ENCODE measurements at regions of chr1 and their contacts with region 1.

Region 1: DNA sequence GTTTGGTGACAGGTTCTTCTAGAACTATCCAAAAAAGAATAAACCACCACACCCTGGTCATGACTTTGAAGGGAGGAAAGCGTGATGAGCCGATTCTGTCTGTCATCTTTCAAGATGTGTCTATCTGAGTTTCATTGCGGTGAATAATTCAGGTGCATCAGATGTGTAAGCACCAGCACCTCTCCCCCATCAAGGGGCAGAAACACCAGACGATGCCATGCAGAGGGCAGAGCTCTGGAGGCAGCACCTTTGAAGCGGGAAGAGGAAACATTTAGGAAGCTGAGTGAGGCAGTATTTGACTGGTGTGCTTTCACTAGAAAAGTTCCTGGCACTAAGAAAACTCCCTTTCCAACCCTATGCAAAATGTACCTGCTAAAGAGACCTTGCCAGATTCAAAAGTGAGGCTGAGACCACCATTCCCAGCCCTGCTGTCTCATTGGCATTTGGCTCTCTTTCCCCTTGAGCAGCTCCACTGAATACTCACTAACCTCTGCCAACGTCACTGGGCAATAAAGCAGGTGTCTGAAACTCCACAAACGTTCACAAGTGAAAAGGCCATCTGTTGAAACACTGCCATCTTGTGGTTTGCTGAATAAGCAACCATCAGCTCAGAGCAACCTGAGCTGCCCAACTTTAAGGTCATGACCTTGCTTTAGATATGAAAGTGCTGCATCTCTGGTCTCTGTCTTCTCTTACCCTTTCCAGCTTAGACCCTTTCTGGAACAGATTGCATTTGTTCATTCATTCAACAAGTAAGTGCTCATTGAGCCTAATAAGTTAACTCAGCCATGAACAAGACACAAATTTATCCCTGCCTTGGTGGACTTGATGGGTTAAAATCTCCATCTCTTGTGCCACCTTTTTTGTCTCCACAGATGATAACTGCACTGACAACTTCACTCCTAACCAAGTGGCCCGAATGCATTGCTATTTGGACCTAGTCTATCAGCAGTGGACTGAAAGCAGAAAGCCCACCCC is 228.6 kb downstream of the PAPPA2 start:
- DNase-seq: peak in 1 of 2 experiments; percentile 9
- H3K4me3 ChIP-seq: no peak overlapping the region
- H3K27ac ChIP-seq: no peak overlapping the region
- H3K4me1 ChIP-seq: peaks cover 0 to 7% (median 5%) of the 10 kb centered on the region in 4 experiments; a peak in 4 of 7 replicates
- H3K27me3 ChIP-seq: no peaks in the 10 kb centered on the region
- CTCF ChIP-seq: peak in 2 of 3 experiments; percentile 84 to 90; a peak in 3 of 4 replicates
- EP300 ChIP-seq: no peak
- POLR2A ChIP-seq: no peak
- RAD21 ChIP-seq: peak; percentile 85 to 89

Region 2: DNA sequence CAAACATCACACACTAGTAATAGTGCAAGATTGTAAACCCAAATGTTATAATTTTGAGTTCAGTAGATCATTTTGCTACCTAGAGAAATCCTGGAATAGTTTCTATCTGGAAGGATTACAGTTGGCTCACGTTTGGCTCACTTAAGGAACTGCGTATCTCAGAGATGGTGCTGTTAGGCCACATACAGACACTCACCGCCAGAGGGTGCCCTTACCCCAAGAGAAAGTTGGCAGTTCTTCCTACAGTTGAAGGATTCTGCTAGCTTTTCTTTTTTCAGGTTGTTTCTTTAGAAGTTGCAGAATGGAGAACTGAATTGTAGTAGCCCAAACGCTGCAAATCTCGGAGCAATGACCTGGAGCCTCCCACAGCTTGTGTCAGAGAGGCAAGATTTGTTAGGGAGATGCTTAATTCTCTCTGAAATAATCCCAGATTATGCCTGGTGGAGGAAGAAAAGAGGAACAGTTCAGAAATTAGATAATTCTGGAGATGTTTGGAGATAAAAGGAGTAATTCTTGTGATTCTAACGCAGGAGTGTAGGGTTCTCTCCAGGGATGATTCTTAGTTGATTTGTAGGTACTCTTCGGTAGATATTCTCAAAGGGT is 316.5 kb before region 1 on chr1:
- CTCF ChIA-PET with region 1: interaction called, 10 read pairs
- POLR2A ChIA-PET with region 1: no interaction called
- DNase-seq: peak; percentile 58 to 93
- H3K4me3 ChIP-seq: no peak overlapping the region
- H3K27ac ChIP-seq: no peak overlapping the region
- H3K4me1 ChIP-seq: no peaks in the 10 kb centered on the region
- H3K27me3 ChIP-seq: no peaks in the 10 kb centered on the region
- CTCF ChIP-seq: peak; percentile 71 to 93 (median 93)
- EP300 ChIP-seq: no peak
- POLR2A ChIP-seq: no peak
- RAD21 ChIP-seq: peak; percentile 98 to 100

Region 3: GRCh38 chr1:176605176-176605575 is 86.4 kb before region 1 on chr1:
- CTCF ChIA-PET with region 1: interaction called, 10 read pairs
- POLR2A ChIA-PET with region 1: no interaction called
- DNase-seq: no peak
- H3K4me3 ChIP-seq: no peak overlapping the region
- H3K27ac ChIP-seq: no peak overlapping the region
- H3K4me1 ChIP-seq: no peaks in the 10 kb centered on the region
- H3K27me3 ChIP-seq: no peaks in the 10 kb centered on the region
- CTCF ChIP-seq: no peak
- EP300 ChIP-seq: no peak
- POLR2A ChIP-seq: no peak
- RAD21 ChIP-seq: no peak

Region 4: DNA sequence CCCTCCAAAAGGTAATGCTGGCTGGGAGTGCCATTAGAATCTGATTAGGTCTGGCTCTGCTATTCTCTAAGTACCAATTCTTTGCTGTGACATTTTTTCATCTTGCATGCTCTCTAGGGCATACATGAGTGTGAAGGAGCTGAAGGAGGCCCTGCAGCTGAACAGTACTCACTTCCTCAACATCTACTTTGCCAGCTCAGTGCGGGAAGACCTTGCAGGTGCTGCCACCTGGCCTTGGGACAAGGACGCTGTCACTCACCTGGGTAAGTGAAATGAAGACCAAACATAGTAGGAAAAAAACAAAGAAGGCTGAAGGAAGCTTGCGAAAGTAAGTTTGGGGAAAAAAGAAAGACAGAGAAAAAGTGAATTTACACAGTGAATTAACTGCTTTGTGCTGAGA is 20.7 kb before region 1 on chr1:
- CTCF ChIA-PET with region 1: interaction called, 19 read pairs
- POLR2A ChIA-PET with region 1: no interaction called
- DNase-seq: no peak
- H3K4me3 ChIP-seq: no peak overlapping the region
- H3K27ac ChIP-seq: no peak overlapping the region
- H3K4me1 ChIP-seq: no peaks in the 10 kb centered on the region
- H3K27me3 ChIP-seq: no peaks in the 10 kb centered on the region
- CTCF ChIP-seq: peak; percentile 6 to 39 (median 31); a peak in 3 of 4 replicates
- EP300 ChIP-seq: no peak
- POLR2A ChIP-seq: no peak
- RAD21 ChIP-seq: peak; percentile 42 to 50

Region 5: GRCh38 chr1:176754676-176755075 is 63.1 kb after region 1 on chr1:
- CTCF ChIA-PET with region 1: no interaction called
- POLR2A ChIA-PET with region 1: no interaction called
- DNase-seq: no peak
- H3K4me3 ChIP-seq: no peak overlapping the region
- H3K27ac ChIP-seq: no peak overlapping the region
- H3K4me1 ChIP-seq: no peaks in the 10 kb centered on the region
- H3K27me3 ChIP-seq: no peaks in the 10 kb centered on the region
- CTCF ChIP-seq: no peak
- EP300 ChIP-seq: no peak
- POLR2A ChIP-seq: no peak
- RAD21 ChIP-seq: no peak

Region 6: GRCh38 chr1:176809292-176809691 is 117.8 kb after region 1 on chr1:
- CTCF ChIA-PET with region 1: no interaction called
- POLR2A ChIA-PET with region 1: no interaction called
- DNase-seq: no peak
- H3K4me3 ChIP-seq: no peak overlapping the region
- H3K27ac ChIP-seq: no peak overlapping the region
- H3K4me1 ChIP-seq: peaks cover 0 to 4% (median 1%) of the 10 kb centered on the region in 4 experiments; a peak in 1 of 7 replicates
- H3K27me3 ChIP-seq: no peaks in the 10 kb centered on the region
- CTCF ChIP-seq: no peak
- EP300 ChIP-seq: no peak
- POLR2A ChIP-seq: no peak
- RAD21 ChIP-seq: no peak